ENCODE measurements at regions of chr16 and their contacts with region 1.

Region 1: DNA sequence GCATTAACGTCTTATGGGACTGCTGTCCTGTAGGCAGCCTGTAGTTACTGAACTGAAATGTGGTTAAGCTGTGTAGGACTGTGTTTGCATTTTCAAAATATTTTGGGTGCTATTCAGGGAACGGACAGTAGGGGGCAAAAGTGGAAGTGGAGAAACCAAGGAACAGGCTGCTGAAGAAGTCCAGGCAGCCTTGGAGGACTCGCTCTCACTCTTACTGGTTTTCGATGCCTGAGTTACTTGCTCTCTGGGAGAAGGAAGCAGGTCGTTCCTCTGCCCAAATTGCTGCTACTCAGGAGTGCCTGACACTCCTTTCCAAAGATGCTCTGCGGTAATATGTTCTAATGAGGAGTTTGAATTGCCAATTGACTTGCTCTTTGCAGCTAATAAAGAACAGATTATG is 64.5 kb upstream of the RBFOX1 start:
- DNase-seq: peak; percentile 41 to 78
- H3K4me3 ChIP-seq: no peak overlapping the region
- H3K27ac ChIP-seq: no peak overlapping the region
- H3K4me1 ChIP-seq: no peaks in the 10 kb centered on the region
- H3K27me3 ChIP-seq: no peaks in the 10 kb centered on the region
- CTCF ChIP-seq: peak; percentile 43 to 79 (median 68)
- EP300 ChIP-seq: no peak
- POLR2A ChIP-seq: no peak
- RAD21 ChIP-seq: peak; percentile 69 to 77

Region 2: GRCh38 chr16:7278636-7279265 is 10.6 kb after region 1 on chr16:
- CTCF ChIA-PET with region 1: interaction called, 15 read pairs
- POLR2A ChIA-PET with region 1: no interaction called
- DNase-seq: no peak
- H3K4me3 ChIP-seq: no peak overlapping the region
- H3K27ac ChIP-seq: no peak overlapping the region
- H3K4me1 ChIP-seq: no peaks in the 10 kb centered on the region
- H3K27me3 ChIP-seq: no peaks in the 10 kb centered on the region
- CTCF ChIP-seq: no peak
- EP300 ChIP-seq: no peak
- POLR2A ChIP-seq: no peak
- RAD21 ChIP-seq: no peak

Region 3: DNA sequence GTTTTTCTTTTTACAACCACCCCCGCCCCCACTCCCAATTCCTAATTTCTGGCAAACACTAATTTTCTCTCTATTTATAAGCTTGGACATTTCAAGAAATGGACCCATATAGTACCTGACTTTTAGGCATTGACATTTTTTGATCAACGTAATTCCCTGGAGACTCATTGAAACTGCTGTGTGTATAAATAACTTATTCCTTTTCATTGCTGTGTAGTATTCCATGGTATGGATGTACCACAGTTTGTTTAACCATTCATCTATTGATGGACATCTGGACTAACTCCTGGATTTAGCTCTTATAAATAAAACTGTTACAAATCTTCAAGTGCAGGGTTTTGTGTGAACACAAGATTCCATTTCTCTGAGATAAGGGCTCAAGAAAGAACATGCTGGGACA is 17.3 kb after region 1 on chr16:
- CTCF ChIA-PET with region 1: interaction called, 12 read pairs
- POLR2A ChIA-PET with region 1: no interaction called
- DNase-seq: no peak
- H3K4me3 ChIP-seq: no peak overlapping the region
- H3K27ac ChIP-seq: no peak overlapping the region
- H3K4me1 ChIP-seq: no peaks in the 10 kb centered on the region
- H3K27me3 ChIP-seq: no peaks in the 10 kb centered on the region
- CTCF ChIP-seq: no peak
- EP300 ChIP-seq: no peak
- POLR2A ChIP-seq: no peak
- RAD21 ChIP-seq: no peak

Region 4: GRCh38 chr16:7303052-7303610 is 34.9 kb after region 1 on chr16:
- CTCF ChIA-PET with region 1: interaction called, 15 read pairs
- POLR2A ChIA-PET with region 1: no interaction called
- DNase-seq: peak in 1 of 2 experiments; percentile 68
- H3K4me3 ChIP-seq: peak overlapping the region; percentile 73 to 99 (median 76)
- H3K27ac ChIP-seq: no peak overlapping the region
- H3K4me1 ChIP-seq: peaks cover 0 to 13% (median 10%) of the 10 kb centered on the region in 4 experiments; a peak in 5 of 7 replicates
- H3K27me3 ChIP-seq: peaks cover 2 to 36% (median 24%) of the 10 kb centered on the region in 4 experiments
- CTCF ChIP-seq: no peak
- EP300 ChIP-seq: no peak
- POLR2A ChIP-seq: no peak
- RAD21 ChIP-seq: no peak